ENCODE measurements at regions of chr6 and their contacts with region 1.

Region 1: GRCh38 chr6:134041093-134041492 is 11.3 kb downstream of the SLC2A12 start:
- DNase-seq: no peak
- H3K4me3 ChIP-seq: no peak overlapping the region
- H3K27ac ChIP-seq: no peak overlapping the region
- H3K4me1 ChIP-seq: peaks cover 2% of the 10 kb centered on the region
- H3K27me3 ChIP-seq: no peaks in the 10 kb centered on the region
- CTCF ChIP-seq: no peak
- POLR2A ChIP-seq: no peak

Region 2: GRCh38 chr6:132279592-132280139 is 1761.4 kb before region 1 on chr6:
- intact Hi-C with region 1: loop called (anchors 10 kb)
- DNase-seq: no peak
- H3K4me3 ChIP-seq: peak overlapping the region in 1 of 2 donors; percentile 24
- H3K27ac ChIP-seq: peak overlapping the region; percentile 34
- H3K4me1 ChIP-seq: no peaks in the 10 kb centered on the region
- H3K27me3 ChIP-seq: no peaks in the 10 kb centered on the region
- CTCF ChIP-seq: peak; percentile 88 to 94 (median 93)
- POLR2A ChIP-seq: no peak

Region 3: GRCh38 chr6:134145786-134146185 is 104.7 kb after region 1 on chr6:
- intact Hi-C with region 1: no loop called
- DNase-seq: no peak
- H3K4me3 ChIP-seq: no peak overlapping the region
- H3K27ac ChIP-seq: peak overlapping the region; percentile 68
- H3K4me1 ChIP-seq: peaks cover 10% of the 10 kb centered on the region
- H3K27me3 ChIP-seq: no peaks in the 10 kb centered on the region
- CTCF ChIP-seq: no peak
- POLR2A ChIP-seq: no peak

Measured in vagina (tissue), 2 donors.